A549 (cell line): ENCODE measurements at regions of chr13 and their contacts with region 1.

Region 1: DNA sequence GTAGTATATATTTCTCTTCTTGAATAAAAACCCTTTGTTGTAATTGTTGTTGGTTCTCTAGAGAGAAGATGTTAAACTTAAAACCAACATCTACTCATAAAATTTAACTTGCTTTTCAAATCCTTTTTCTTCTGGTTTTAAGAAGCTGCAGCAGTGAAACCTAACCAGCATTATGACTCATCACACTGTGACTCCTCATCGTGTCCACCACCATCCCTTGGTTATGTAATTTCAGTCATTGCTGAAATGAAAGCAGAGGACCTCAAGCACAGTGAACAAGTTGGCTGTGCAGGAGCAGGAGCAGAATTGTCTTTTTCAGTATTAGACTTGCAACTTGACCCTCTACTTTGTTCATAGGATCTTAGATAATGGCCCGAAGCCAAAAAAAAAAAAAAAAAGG is 64.9 kb upstream of the HTR2A start:
- DNase-seq: peak in 1 of 2 experiments; percentile 2
- ATAC-seq: no peak
- H3K4me3 ChIP-seq: no peak overlapping the region
- H3K27ac ChIP-seq: no peak overlapping the region
- H3K4me1 ChIP-seq: no peaks in the 10 kb centered on the region
- CTCF ChIP-seq: no peak
- EP300 ChIP-seq: no peak
- POLR2A ChIP-seq: no peak
- RAD21 ChIP-seq: no peak

Region 2: GRCh38 chr13:46492946-46493345 is 468.8 kb before region 1 on chr13:
- CTCF ChIA-PET with region 1: no interaction called
- POLR2A ChIA-PET with region 1: no interaction called
- DNase-seq: peak; percentile 11 to 43
- ATAC-seq: peak in 1 of 2 experiments; percentile 54; a peak in 2 of 6 replicates
- H3K4me3 ChIP-seq: no peak overlapping the region
- H3K27ac ChIP-seq: no peak overlapping the region
- H3K4me1 ChIP-seq: 0 out of 3 replicates have a peak, but pooled peaks cover 6% of the 10 kb centered on the region
- CTCF ChIP-seq: peak; percentile 72
- EP300 ChIP-seq: no peak
- POLR2A ChIP-seq: no peak
- RAD21 ChIP-seq: peak; percentile 80 to 83

Region 3: DNA sequence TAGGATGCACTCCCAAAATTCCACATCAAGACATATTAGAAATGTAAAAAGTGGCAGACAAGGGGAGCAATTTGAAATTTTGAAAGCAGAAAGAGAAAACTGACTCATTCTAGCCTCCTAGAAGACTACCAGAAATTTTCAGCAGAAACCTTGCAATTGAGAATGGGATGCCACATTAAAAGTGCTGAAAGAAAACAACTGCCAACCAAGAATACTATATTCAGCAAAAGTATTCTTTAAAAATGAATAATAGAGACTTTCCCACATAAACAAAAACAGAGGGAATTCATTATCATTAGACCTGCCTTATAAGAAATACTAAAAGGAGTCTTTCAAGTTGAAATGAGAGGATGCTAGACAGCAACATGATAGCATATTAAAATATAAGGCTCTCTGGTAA is 13.5 kb after region 1 on chr13:
- CTCF ChIA-PET with region 1: interaction called, 14 read pairs
- POLR2A ChIA-PET with region 1: no interaction called
- DNase-seq: no peak
- ATAC-seq: no peak
- H3K4me3 ChIP-seq: no peak overlapping the region
- H3K27ac ChIP-seq: no peak overlapping the region
- H3K4me1 ChIP-seq: no peaks in the 10 kb centered on the region
- CTCF ChIP-seq: no peak
- EP300 ChIP-seq: no peak
- POLR2A ChIP-seq: no peak
- RAD21 ChIP-seq: no peak